Astrocyte of the cerebellum (primary cell): ENCODE measurements at regions of chr13 and their contacts with region 1.

Region 1: GRCh38 chr13:82196087-82196486 is 1686.2 kb downstream of the SLITRK1 start:
- DNase-seq: no peak
- H3K4me3 ChIP-seq: no peak overlapping the region
- CTCF ChIP-seq: no peak

Region 2: GRCh38 chr13:82147526-82147925 is 48.6 kb before region 1 on chr13:
- in situ Hi-C with region 1: loop called (anchors 5 kb)
- DNase-seq: no peak
- H3K4me3 ChIP-seq: no peak overlapping the region
- CTCF ChIP-seq: no peak